Naive thymus-derived CD8-positive, alpha-beta T cell (primary cell): ENCODE measurements at regions of chr9 and their contacts with region 1.

Region 1: GRCh38 chr9:89428901-89429890 is 68.7 kb downstream of the SEMA4D start:
- DNase-seq: peak; percentile 47 to 87 (median 72)
- ATAC-seq: peak; percentile 61 to 83
- H3K4me3 Mint-ChIP-seq: peak overlapping the region in 9 of 10 donors; percentile 39 to 85 (median 68)
- H3K27ac Mint-ChIP-seq: peak overlapping the region; percentile 81 to 98 (median 92)
- H3K4me1 Mint-ChIP-seq: peaks cover 45 to 100% (median 99%) of the 10 kb centered on the region in 4 donors
- H3K27me3 Mint-ChIP-seq: no peaks in the 10 kb centered on the region

Region 2: DNA sequence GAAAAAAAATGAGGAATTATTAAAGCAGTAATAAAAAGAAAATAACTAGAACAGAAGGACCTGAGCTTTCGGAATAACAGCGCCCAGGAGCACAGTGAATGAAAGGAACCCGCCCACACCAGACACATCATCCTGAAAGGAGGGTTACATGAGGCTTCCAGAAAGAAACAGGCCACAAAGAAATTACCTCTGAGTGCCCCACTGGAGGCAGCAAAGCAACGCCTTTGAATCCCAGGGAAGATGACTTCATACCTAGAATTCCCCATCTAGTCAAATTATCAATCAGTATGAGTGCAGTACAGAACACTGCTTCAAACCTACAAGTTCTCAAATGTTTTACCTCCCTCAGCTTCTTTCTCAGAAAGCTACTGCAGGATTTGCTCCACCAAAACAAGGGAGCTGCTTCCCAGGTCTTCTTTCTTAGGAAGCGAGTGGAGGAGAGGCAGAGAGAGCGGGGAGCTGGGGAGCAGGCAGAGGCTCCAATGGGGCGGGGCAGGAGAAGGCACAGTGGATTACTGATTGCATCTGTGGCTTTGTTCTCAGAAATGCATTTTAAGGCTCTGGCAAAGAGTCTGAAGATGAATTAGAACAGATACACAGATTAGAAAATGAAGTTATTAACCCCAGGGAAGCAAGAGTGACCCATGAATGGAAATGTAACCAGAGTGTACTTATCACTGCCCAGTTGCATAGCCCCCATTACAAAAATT is 18.4 kb before region 1 on chr9:
- POLR2A ChIA-PET with region 1: interaction called, 14 read pairs
- DNase-seq: no peak
- ATAC-seq: no peak
- H3K4me3 Mint-ChIP-seq: peak overlapping the region in 8 of 10 donors; percentile 6 to 69 (median 38)
- H3K27ac Mint-ChIP-seq: peak overlapping the region in 9 of 10 donors; percentile 24 to 92 (median 79)
- H3K4me1 Mint-ChIP-seq: peaks cover 55 to 97% (median 85%) of the 10 kb centered on the region in 4 donors
- H3K27me3 Mint-ChIP-seq: no peaks in the 10 kb centered on the region

Region 3: DNA sequence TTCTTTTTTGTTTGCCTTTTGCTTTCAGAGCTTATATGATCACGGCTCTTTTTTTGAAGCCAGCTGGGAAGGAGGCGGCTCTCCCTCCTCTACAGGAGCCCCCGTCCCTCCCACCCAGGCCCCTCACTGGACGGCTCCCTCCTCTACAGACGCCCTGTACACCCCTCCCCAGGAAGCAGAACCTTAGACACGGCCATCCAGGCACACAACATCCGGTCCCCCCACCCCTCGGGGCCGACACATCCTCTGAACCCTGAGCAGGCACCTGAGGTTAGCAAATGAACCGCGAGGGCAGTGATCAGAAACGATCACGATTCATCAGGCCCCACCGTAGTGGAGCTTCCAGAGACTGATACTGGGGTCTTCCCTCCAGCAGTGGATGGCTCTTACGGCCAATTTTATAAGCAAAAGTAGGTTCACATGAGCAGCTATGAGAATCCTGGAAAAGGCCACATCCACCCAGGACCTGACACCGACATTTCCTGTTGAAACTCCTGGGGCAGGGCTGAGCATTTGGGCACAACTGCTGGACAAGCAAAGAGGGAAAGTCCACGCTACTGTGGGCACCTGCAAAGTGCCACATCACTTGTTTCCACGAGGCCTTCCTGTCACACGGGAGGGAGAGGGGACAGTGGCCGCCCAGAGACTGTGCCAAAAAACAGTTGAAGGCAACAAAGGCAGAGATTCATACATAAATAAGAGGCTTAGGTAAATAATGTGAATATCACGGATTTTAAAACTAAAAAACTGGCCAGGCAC is 10.1 kb before region 1 on chr9:
- POLR2A ChIA-PET with region 1: interaction called, 15 read pairs
- DNase-seq: peak; percentile 33 to 84 (median 65)
- ATAC-seq: peak; percentile 77 to 89
- H3K4me3 Mint-ChIP-seq: peak overlapping the region; percentile 65 to 87 (median 80)
- H3K27ac Mint-ChIP-seq: peak overlapping the region; percentile 90 to 98 (median 94)
- H3K4me1 Mint-ChIP-seq: peaks cover 51 to 91% (median 85%) of the 10 kb centered on the region in 4 donors
- H3K27me3 Mint-ChIP-seq: no peaks in the 10 kb centered on the region